Esophagus squamous epithelium (tissue), 5 donors: ENCODE measurements at regions of chr7 and their contacts with region 1.

Region 1: DNA sequence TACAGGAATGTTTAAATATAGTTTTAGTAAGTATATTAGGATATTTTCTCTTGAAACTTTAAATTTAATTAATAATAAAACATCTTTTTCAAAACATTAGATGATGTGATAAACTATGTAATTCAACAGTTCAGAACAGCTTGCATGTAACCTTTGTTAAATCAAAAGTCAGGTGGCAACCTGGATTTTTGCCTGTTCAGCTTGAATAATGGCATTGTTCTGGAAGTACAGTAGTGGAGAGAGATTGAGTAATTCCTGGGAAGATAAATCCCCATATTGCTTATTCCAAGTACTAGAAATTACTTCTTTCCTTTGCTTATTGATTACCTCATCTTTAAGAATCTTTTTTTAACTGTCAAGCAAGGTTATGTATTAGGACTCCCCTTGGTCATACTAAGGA is 20.1 kb upstream of the CFTR start:
- DNase-seq: no peak
- H3K4me3 ChIP-seq: no peak overlapping the region
- H3K27ac ChIP-seq: no peak overlapping the region
- H3K4me1 ChIP-seq: no peaks in the 10 kb centered on the region
- H3K27me3 ChIP-seq: no peaks in the 10 kb centered on the region
- CTCF ChIP-seq: no peak
- POLR2A ChIP-seq: no peak

Region 2: GRCh38 chr7:117562734-117563133 is 103.0 kb after region 1 on chr7:
- intact Hi-C with region 1: no loop called
- DNase-seq: no peak
- H3K4me3 ChIP-seq: no peak overlapping the region
- H3K27ac ChIP-seq: no peak overlapping the region
- H3K4me1 ChIP-seq: no peaks in the 10 kb centered on the region
- H3K27me3 ChIP-seq: no peaks in the 10 kb centered on the region
- CTCF ChIP-seq: no peak
- POLR2A ChIP-seq: no peak

Region 3: DNA sequence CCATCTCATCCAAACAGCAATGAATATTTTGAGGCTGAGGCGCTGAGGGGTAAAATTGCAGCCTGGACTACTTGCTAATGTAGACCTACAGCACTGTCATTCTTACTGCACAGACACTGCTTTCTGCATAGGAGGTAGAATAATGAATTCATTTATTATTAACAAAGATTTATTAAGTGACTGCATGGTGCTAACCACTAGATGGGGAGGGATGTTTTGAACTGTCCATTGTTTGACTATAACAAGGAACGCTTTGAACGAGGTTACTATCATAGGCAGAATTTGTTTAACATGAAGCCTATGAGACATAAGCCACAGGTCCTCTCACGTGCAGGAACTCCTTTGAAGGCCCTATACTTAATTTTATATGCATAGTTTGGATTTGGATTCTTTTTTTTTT is 163.9 kb after region 1 on chr7:
- intact Hi-C with region 1: no loop called
- DNase-seq: no peak
- H3K4me3 ChIP-seq: no peak overlapping the region
- H3K27ac ChIP-seq: no peak overlapping the region
- H3K4me1 ChIP-seq: no peaks in the 10 kb centered on the region
- H3K27me3 ChIP-seq: no peaks in the 10 kb centered on the region
- CTCF ChIP-seq: no peak
- POLR2A ChIP-seq: no peak

Region 4: GRCh38 chr7:117711556-117711955 is 251.8 kb after region 1 on chr7:
- intact Hi-C with region 1: loop called (anchors 5 kb)
- DNase-seq: no peak
- H3K4me3 ChIP-seq: no peak overlapping the region
- H3K27ac ChIP-seq: no peak overlapping the region
- H3K4me1 ChIP-seq: no peaks in the 10 kb centered on the region
- H3K27me3 ChIP-seq: no peaks in the 10 kb centered on the region
- CTCF ChIP-seq: no peak
- POLR2A ChIP-seq: no peak

Region 5: DNA sequence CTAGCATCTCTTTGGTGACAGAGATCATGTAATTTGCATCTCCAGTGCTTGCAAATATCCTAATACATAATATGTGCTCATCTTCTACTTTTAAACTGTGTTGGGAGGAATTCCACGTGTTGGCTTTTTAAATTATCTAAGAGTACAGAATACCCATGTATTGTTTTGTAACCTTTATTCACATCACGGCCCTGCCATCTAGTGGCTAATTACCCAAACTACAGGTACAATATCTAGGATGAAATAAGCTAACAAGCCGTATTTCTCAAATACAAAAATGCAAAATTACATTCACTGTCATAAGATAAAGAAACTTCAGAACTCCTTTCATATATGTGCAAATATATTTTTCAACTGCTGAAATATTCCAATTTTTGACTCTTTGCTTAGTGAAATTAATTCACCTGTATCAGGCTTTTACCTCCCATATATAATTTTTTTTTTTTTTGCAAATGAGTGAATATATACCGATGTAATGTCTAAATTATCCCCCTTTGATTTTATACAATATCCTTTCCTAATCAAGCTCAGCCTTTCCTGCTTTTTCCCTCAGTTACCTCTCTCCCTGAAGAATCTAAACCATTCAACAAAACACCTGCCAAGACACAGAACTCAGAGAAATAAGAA is 693.9 kb after region 1 on chr7:
- intact Hi-C with region 1: loop called (anchors 10 kb)
- DNase-seq: no peak
- H3K4me3 ChIP-seq: no peak overlapping the region
- H3K27ac ChIP-seq: no peak overlapping the region
- H3K4me1 ChIP-seq: no peaks in the 10 kb centered on the region
- H3K27me3 ChIP-seq: no peaks in the 10 kb centered on the region
- CTCF ChIP-seq: peak; percentile 30 to 81 (median 64)
- POLR2A ChIP-seq: no peak